HEK293T (cell line): ENCODE measurements at regions of chr17 and their contacts with region 1.

Region 1: DNA sequence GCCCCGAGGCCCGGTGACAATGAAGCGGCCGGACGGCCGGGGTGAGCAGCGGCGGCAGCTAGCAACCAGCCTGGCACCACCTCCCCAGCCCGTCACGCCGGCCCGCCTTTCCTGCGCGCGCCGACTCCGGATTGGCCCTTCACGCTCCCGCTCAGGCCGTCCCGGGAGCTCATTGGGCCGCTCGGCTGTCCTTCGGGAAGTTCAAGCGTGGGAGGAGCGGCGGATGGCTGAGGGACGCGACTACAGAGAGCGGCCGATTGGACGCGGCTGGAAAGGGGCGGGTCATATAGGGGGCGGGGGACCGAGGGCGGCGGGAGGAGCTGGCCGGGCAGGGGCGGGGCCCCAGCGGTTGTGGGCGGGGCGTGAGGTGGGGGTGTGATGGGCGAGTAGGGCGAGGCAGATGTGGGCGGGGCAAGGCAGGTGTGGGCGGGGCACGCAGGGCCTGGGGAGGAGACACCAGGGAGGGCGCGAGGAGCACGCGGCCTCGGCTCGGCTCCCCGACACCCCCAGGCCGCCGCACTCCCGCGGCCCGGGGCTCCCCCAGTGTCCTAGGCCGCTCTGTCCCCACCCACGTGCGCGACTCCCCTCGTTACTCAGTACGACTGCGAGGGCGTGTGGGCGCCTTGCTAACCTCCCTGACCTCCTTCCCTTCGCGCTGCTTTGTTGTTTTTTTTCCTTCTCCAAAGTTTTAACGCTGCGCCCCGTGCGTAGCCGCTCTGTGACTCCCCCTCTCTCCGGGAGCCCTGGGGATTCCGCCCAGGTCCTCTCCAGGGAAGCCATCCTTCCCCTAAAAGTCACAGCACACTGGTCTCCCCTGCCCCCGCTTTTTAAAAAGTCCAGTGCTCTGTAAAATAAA is at the start of gene CEP131:
- DNase-seq: peak; percentile 100

Region 2: GRCh38 chr17:81238817-81239600 is 15.9 kb after region 1 on chr17 and contains the starts of genes NDUFAF8 and TEPSIN:
- CTCF ChIA-PET with region 1: interaction called, 5 read pairs
- POLR2A ChIA-PET with region 1: interaction called, 23 read pairs
- DNase-seq: peak; percentile 99

Region 3: DNA sequence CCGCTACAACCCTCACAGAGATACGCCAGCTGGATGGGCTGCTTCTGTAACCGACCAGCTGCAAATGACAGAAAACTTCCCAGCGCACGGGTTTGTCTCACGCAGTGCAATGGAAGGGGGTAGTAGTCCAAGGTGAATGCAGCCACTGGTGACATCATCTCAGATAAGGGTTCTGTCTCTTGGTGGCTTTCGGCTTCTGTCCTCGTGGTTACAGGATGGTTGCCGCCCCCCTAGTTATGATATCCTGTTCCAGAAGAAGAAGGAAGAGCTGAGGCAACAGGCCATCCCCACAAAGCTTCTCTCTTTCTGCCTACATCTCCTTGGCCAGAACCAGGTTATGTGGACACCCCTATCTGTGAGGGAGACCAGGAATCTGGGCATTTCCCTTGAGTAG is 131.8 kb after region 1 on chr17:
- CTCF ChIA-PET with region 1: no interaction called
- POLR2A ChIA-PET with region 1: no interaction called
- DNase-seq: no peak